Endothelial cell of umbilical vein (primary cell): ENCODE measurements at regions of chr18 and their contacts with region 1.

Region 1: GRCh38 chr18:47204908-47205522 is 28.9 kb upstream of the IER3IP1 start:
- DNase-seq: peak; percentile 48
- H3K4me3 ChIP-seq: no peak overlapping the region
- H3K27ac ChIP-seq: no peak overlapping the region
- H3K4me1 ChIP-seq: no peaks in the 10 kb centered on the region
- H3K27me3 ChIP-seq: peaks cover 5 to 12% of the 10 kb centered on the region in 2 experiments
- CTCF ChIP-seq: peak; percentile 73 to 78
- POLR2A ChIP-seq: no peak

Region 2: DNA sequence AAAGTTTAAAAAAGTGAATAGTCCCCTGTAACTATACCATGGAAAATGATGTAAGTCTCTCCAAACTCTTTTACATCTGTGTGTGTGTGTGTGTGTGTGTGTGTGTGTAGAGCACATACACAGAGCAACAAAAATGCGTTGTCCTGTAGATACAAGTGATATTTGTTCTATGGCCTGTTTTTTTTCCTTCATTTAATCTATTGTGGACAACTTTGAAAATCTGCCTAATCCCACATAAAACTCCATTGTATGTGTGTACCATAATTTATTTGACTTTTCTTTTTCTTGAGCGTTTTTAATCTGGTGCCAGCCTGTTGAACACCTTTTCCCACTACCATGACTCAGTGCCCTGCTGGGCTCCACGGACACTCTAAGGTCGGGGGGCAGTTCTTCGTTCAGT is 117.3 kb before region 1 on chr18:
- CTCF ChIA-PET with region 1: interaction called, 11 read pairs
- POLR2A ChIA-PET with region 1: no interaction called
- dilution Hi-C with region 1: no loop called
- intact Hi-C with region 1: no loop called
- DNase-seq: no peak
- H3K4me3 ChIP-seq: no peak overlapping the region
- H3K27ac ChIP-seq: no peak overlapping the region
- H3K4me1 ChIP-seq: no peaks in the 10 kb centered on the region
- H3K27me3 ChIP-seq: no peaks in the 10 kb centered on the region
- CTCF ChIP-seq: no peak
- POLR2A ChIP-seq: no peak

Region 3: DNA sequence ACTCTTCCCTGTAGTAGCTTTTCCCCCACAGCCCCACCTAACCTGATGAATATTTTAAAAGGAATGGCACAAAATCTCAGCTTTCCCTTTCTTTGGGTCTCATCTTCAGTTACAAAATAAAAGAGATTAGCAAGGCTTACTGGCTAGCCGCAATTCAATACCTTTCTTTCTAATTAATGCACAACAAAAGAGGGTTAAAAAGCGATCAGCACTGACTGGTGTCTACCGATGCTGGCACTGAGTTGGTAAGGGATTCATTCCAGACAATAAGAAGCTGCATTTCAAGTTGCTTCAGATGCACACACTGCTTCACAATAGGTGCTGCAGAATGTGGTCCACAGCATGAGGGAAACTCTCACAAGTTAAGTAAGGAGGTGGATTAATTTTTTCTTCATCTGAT is 96.6 kb before region 1 on chr18:
- CTCF ChIA-PET with region 1: interaction called, 156 read pairs
- POLR2A ChIA-PET with region 1: no interaction called
- dilution Hi-C with region 1: no loop called
- intact Hi-C with region 1: no loop called
- DNase-seq: no peak
- H3K4me3 ChIP-seq: no peak overlapping the region
- H3K27ac ChIP-seq: no peak overlapping the region
- H3K4me1 ChIP-seq: no peaks in the 10 kb centered on the region
- H3K27me3 ChIP-seq: no peaks in the 10 kb centered on the region
- CTCF ChIP-seq: no peak
- POLR2A ChIP-seq: no peak

Region 4: DNA sequence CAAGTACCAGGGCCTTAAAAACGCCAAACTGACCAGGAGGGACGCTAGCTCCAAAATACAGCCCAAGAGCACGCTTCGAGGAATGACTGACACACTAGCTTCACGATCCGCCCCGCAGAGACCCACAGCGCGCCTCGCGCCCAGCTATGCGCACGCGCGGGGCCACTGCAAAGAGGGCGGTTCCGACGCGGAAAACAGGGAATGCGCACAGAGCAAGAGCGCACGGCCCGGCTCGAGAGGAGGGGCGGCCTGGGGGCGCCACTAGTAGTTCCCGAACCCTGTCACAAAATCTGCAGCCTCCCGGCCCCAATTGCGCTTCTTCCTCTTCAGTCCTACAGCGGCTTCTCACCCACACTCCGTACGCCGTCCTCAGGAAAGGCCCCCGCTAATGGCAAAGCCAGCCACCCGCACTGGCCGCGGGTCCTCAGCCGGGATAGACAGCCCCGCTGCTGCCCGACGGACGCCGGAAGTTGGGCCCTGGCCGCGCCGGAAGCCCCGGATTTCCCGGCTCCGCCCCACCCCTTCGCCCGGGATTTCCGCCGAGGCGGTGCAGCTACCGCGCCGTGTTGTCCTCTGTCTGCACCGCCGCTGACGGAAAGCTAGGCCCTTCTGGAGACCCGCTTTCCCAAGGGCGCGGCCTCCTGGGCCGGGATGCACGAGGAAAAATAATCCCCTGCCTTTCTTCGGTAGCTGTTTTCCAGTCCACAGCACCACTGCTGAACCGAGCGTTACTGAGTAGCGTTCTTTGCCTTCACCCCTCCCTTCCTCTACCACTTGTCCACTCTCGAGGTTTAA is 54.8 kb before region 1 on chr18 and contains the start of gene HDHD2:
- CTCF ChIA-PET with region 1: interaction called, 17 read pairs
- POLR2A ChIA-PET with region 1: no interaction called
- dilution Hi-C with region 1: no loop called
- intact Hi-C with region 1: no loop called
- DNase-seq: peak; percentile 82
- H3K4me3 ChIP-seq: peak within 1 kb of the TSS; percentile 45 to 72 (median 57)
- H3K27ac ChIP-seq: peak within 1 kb of the TSS; percentile 63
- H3K4me1 ChIP-seq: peaks cover 15% of the 10 kb centered on the region
- H3K27me3 ChIP-seq: no peaks in the 10 kb centered on the region
- CTCF ChIP-seq: no peak
- POLR2A ChIP-seq: peak; percentile 95
- total RNA-seq, gene HDHD2: 13.7 and 18.7 TPM in 2 replicates

Region 5: DNA sequence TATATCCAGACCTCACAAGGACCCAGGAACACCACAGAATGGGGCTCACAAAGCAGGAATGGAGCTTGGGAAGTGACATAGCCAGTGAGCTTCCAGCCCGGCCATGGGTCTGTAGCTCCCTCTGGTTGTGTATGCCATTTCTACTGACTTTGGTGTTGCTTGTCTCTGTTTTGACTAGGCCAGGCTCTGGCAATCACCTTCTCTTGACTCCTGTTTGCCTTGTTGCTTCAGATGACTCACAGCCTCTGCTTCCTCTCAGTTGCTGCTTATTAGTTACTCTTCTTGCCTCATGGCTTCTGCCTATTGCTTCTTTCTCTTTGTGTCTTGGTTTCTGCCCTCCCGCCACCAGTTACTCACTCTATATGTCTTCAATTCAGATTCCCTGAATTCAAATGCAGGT is 13.1 kb before region 1 on chr18:
- CTCF ChIA-PET with region 1: interaction called, 12 read pairs
- POLR2A ChIA-PET with region 1: no interaction called
- dilution Hi-C with region 1: no loop called
- intact Hi-C with region 1: no loop called
- DNase-seq: peak; percentile 35
- H3K4me3 ChIP-seq: no peak overlapping the region
- H3K27ac ChIP-seq: no peak overlapping the region
- H3K4me1 ChIP-seq: peaks cover 3% of the 10 kb centered on the region
- H3K27me3 ChIP-seq: peaks cover 4 to 13% of the 10 kb centered on the region in 2 experiments
- CTCF ChIP-seq: no peak
- POLR2A ChIP-seq: no peak

Region 6: DNA sequence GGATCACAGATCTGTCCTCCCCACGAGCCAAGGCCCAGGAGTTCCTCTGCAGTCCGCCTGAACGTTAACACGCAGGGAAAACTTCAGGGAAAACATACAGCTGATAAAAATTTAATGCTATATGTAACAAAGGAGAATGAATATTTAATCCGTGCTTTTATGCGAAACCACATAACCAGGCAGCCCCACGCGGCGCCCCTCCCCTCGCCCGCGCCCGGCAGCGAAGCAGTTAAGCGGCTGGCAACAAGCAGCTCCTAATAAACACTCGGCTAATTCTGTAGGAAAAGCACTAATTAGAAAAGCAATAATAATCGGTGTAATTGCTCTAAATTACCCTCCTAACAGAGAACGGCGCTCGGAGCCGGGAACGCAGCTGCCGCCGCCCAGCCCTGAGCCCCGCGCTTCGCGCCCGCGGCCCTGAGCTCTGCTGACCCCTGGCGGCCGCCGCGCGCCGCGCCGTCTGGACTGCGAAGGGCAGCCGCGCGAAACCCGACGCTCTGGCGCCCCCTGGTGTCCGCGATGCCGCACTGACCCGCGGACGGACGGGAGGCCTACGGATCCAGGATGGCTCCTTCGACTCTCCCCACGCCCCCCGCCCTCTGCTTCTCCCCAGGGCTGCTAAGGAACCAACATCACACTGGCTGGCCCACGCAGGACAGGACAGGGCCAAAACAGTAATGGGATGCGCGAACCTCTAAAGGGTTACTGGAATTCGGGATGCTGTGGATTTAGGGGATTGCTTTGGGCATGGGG is 544.0 kb after region 1 on chr18:
- CTCF ChIA-PET with region 1: interaction called, 12 read pairs
- POLR2A ChIA-PET with region 1: no interaction called
- dilution Hi-C with region 1: no loop called
- intact Hi-C with region 1: no loop called
- DNase-seq: peak; percentile 73
- H3K4me3 ChIP-seq: peak overlapping the region in 1 of 3 experiments; percentile 46
- H3K27ac ChIP-seq: no peak overlapping the region
- H3K4me1 ChIP-seq: no peaks in the 10 kb centered on the region
- H3K27me3 ChIP-seq: no peaks in the 10 kb centered on the region
- CTCF ChIP-seq: peak; percentile 94 to 100
- POLR2A ChIP-seq: no peak